B cell (primary cell): ENCODE measurements at regions of chr2 and their contacts with region 1.

Region 1: DNA sequence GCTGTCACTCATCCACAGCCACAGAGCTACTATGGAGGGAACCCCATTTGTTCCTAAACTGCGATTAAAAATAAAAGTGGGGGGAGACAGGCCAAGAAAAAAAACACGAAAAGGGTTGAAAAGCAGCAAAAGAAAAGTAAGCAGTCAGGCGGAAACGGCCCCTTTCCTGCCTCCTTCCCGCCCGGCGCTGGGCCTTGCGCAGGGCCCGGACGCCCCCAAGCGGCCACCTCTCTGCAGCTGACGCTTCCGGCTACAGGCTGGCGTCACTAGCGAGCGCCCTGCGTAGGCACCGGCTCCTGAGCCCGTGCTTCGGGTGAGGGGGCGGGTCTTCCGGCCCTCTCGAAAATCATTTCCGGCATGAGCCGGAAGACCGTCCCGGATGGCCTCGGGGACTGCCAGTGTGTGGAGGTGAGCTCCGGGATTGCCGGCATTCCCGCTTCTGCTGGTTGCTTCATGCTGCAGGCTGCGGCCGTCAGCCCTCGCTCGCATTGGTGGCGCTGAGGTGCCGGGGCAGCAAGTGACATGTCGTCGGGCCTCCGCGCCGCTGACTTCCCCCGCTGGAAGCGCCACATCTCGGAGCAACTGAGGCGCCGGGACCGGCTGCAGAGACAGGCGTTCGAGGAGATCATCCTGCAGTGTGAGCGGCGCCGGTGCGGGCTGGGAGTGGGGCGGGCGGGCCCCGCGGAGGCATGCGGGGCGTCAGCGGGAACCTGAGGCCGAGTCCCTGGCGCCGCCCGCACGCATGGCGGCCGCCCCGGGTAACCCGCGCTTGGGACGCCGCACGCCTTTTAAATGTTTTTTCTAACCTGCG is at the start of gene ATG16L1:
- DNase-seq: peak; percentile 96
- ATAC-seq: peak; percentile 99
- H3K4me3 ChIP-seq: peak within 1 kb of the TSS; percentile 81 to 94 (median 93)
- H3K4me3 Mint-ChIP-seq: peak within 1 kb of the TSS; percentile 96
- H3K27ac ChIP-seq: peak within 1 kb of the TSS; percentile 72 to 81
- H3K27ac Mint-ChIP-seq: peak within 1 kb of the TSS; percentile 91
- H3K4me1 ChIP-seq: peaks cover 20 to 28% of the 10 kb centered on the region in 2 donors
- H3K4me1 Mint-ChIP-seq: peaks cover 49% of the 10 kb centered on the region
- H3K27me3 ChIP-seq: no peaks in the 10 kb centered on the region
- H3K27me3 Mint-ChIP-seq: no peaks in the 10 kb centered on the region
- CTCF ChIP-seq: peak; percentile 93
- total RNA-seq, gene ATG16L1: 69.9 TPM in 2 replicates

Region 2: DNA sequence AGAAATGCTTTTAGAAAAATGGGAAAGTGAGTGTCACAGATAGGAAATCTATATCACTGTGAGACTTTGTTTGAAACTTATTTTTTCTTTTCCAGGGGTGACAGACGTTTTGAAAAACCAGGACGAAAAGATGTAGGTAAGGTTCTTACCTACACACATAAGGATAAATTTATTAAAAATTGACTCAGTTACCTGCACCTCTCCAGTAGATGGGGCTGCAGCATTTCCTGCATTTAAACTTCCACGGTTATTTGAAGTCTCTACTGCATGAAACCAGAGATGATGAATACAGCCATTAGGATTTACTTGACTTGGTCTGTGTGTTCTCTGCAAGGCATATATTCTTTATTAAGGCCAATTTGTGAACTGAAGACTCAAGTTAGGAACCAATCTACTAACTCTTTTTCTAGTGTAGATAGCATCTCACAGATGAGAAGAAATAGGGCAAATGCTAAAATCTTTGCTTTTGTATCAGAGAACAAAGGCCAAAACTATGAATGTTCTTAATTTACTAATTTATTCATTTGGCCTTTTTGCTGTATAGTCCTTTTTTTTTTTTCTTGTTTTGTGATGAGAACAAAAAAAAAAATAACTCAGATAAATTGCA is 490.1 kb before region 1 on chr2:
- CTCF ChIA-PET with region 1: interaction called, 5 read pairs
- POLR2A ChIA-PET with region 1: interaction called, 6 read pairs
- intact Hi-C with region 1: loop called (anchors 1 kb)
- DNase-seq: peak; percentile 56
- ATAC-seq: no peak
- H3K4me3 ChIP-seq: no peak overlapping the region
- H3K4me3 Mint-ChIP-seq: no peak overlapping the region
- H3K27ac ChIP-seq: no peak overlapping the region
- H3K27ac Mint-ChIP-seq: no peak overlapping the region
- H3K4me1 ChIP-seq: no peaks in the 10 kb centered on the region
- H3K4me1 Mint-ChIP-seq: no peaks in the 10 kb centered on the region
- H3K27me3 ChIP-seq: no peaks in the 10 kb centered on the region
- H3K27me3 Mint-ChIP-seq: no peaks in the 10 kb centered on the region
- CTCF ChIP-seq: peak; percentile 77

Region 3: DNA sequence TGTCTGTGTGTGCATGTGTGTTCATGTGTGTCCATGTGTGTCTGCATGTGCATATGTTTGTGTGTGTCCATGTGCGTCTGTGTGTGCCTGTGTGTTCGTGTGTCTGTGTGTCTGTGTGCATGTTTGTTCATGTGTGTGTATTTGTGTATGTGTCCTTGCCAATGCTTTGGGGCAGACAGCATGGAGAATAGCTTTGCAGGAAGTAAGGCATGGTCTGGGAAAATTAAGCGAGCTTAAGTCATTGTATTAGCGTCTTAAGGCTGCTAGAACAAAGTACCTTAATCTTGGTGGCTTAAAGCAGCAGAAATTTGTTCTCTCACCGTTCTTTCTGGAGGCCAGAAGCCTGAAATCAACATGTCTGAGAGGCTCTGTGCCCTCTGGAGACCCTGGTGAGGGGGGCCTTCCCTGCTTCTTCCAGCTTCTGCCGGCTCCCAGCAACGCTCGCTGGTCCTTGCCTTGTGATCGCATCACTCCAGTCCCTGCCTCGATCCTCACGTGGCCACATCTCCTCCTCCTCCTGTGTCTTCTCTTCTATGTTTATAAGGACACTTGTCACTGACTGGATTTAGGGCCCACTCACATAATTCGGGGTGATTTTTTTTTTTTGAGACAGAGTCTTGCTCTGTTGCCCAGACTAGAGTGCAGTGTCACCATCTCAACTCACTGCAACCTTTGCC is 215.2 kb before region 1 on chr2:
- CTCF ChIA-PET with region 1: no interaction called
- POLR2A ChIA-PET with region 1: no interaction called
- intact Hi-C with region 1: no loop called
- DNase-seq: no peak
- ATAC-seq: no peak
- H3K4me3 ChIP-seq: no peak overlapping the region
- H3K4me3 Mint-ChIP-seq: no peak overlapping the region
- H3K27ac ChIP-seq: no peak overlapping the region
- H3K27ac Mint-ChIP-seq: no peak overlapping the region
- H3K4me1 ChIP-seq: no peaks in the 10 kb centered on the region
- H3K4me1 Mint-ChIP-seq: no peaks in the 10 kb centered on the region
- H3K27me3 ChIP-seq: no peaks in the 10 kb centered on the region
- H3K27me3 Mint-ChIP-seq: peaks cover 10% of the 10 kb centered on the region
- CTCF ChIP-seq: no peak

Region 4: DNA sequence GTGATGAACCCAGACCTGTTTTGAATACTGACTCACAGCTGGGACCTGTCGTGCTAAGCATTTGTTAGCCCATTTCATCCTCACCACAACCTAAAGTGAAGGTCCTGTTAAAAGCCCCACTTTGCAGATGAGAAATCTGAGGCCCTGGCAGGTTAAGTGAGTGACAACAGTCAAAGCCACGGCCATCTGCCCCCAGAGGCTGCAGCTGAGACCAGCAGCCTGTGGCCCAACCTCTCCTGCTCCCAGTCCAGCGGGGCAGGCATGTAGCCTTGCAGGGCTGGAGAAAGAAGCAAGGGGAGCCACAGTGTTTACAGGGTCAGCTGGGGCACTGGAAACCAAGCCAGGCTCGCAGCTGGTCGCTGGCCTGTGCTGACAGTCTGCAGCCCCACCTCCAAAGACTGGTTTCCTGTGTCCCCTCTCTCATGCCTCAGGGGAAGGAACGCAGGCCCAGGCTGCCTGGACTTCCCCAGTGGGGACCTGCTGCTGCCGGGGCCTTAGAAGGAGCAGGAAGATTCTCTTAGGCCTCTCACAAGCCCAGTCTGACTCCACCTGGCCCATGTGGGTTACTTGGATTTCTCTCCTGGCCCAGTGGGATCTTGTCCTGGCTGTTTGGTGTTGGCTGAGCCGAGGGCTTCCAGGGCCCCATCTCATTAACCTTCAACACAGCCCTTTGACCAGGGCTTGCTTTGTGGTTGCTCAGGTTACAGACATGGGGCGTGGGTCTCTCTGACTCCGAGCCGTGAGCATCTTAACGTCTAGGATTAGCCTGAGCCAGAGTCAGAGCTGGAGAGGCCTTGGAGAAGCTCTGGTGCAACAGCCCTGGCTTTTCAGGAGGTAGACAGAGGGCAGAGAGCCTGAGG is 189.7 kb before region 1 on chr2:
- CTCF ChIA-PET with region 1: interaction called, 19 read pairs
- POLR2A ChIA-PET with region 1: interaction called, 4 read pairs
- intact Hi-C with region 1: loop called (anchors 1 kb)
- DNase-seq: no peak
- ATAC-seq: peak; percentile 12
- H3K4me3 ChIP-seq: peak overlapping the region; percentile 91 to 99 (median 98)
- H3K4me3 Mint-ChIP-seq: peak overlapping the region; percentile 76
- H3K27ac ChIP-seq: peak overlapping the region; percentile 90 to 95
- H3K27ac Mint-ChIP-seq: peak overlapping the region; percentile 87
- H3K4me1 ChIP-seq: peaks cover 38 to 66% of the 10 kb centered on the region in 2 donors
- H3K4me1 Mint-ChIP-seq: peaks cover 56% of the 10 kb centered on the region
- H3K27me3 ChIP-seq: no peaks in the 10 kb centered on the region
- H3K27me3 Mint-ChIP-seq: no peaks in the 10 kb centered on the region
- CTCF ChIP-seq: peak; percentile 20

Region 5: GRCh38 chr2:233185963-233186362 is 65.5 kb before region 1 on chr2:
- CTCF ChIA-PET with region 1: interaction called, 15 read pairs
- POLR2A ChIA-PET with region 1: no interaction called
- intact Hi-C with region 1: loop called (anchors 5 kb)
- DNase-seq: peak; percentile 61
- ATAC-seq: peak; percentile 74
- H3K4me3 ChIP-seq: no peak overlapping the region
- H3K4me3 Mint-ChIP-seq: peak overlapping the region; percentile 13
- H3K27ac ChIP-seq: peak overlapping the region; percentile 9 to 68
- H3K27ac Mint-ChIP-seq: peak overlapping the region; percentile 85
- H3K4me1 ChIP-seq: peaks cover 14 to 20% of the 10 kb centered on the region in 2 donors
- H3K4me1 Mint-ChIP-seq: peaks cover 35% of the 10 kb centered on the region
- H3K27me3 ChIP-seq: no peaks in the 10 kb centered on the region
- H3K27me3 Mint-ChIP-seq: no peaks in the 10 kb centered on the region
- CTCF ChIP-seq: no peak

Region 6: DNA sequence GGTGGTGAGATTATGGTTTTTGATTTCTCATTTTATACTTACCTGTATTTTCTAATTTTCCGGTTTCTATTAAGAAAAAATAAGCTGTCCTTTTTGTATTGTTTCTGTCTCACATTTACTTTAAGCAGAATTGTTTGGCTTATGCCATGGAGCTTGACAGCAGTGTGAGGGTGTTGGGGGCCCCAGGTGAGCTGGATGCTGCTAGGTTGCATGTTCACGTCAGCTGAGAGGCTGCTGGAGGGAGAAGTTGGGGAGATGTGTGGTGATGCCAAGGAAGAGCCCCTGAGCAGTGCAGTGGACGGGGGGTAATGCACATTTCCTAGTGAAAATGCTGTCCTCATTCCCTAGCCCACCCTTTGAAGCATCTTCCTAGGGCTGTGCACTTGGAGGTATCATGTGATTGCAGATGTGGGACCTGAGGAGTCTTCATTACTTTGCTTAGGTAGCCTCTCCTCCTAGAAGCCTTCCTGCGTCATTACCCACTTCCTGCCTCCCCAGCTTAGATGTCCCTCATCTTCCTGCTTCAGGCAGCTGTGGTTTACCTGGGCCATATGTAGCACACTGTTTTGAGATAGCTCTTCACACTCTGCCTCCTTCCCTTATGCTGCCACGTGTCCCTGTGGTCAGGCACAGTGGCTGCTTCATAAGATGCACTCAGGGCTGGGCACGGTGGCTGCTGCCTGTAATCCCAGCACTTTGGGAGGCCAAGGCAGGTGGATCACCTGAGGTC is 16.2 kb after region 1 on chr2:
- CTCF ChIA-PET with region 1: interaction called, 8 read pairs
- POLR2A ChIA-PET with region 1: no interaction called
- intact Hi-C with region 1: loop called (anchors 1 kb)
- DNase-seq: peak; percentile 78
- ATAC-seq: peak; percentile 94
- H3K4me3 ChIP-seq: no peak overlapping the region
- H3K4me3 Mint-ChIP-seq: peak overlapping the region; percentile 48
- H3K27ac ChIP-seq: peak overlapping the region; percentile 57 to 73
- H3K27ac Mint-ChIP-seq: peak overlapping the region; percentile 75
- H3K4me1 ChIP-seq: peaks cover 30 to 38% of the 10 kb centered on the region in 2 donors
- H3K4me1 Mint-ChIP-seq: peaks cover 49% of the 10 kb centered on the region
- H3K27me3 ChIP-seq: no peaks in the 10 kb centered on the region
- H3K27me3 Mint-ChIP-seq: no peaks in the 10 kb centered on the region
- CTCF ChIP-seq: no peak